ENCODE measurements at regions of chr2 and their contacts with region 1.

Region 1: GRCh38 chr2:127398239-127398590 is 10.4 kb upstream of the MAP3K2 start:
- DNase-seq: peak; percentile 49

Region 2: GRCh38 chr2:127387655-127388422 is 10.4 kb before region 1 on chr2 and contains the start of gene MAP3K2:
- CTCF ChIA-PET with region 1: no interaction called
- POLR2A ChIA-PET with region 1: interaction called, 10 read pairs
- DNase-seq: peak; percentile 99

Region 3: GRCh38 chr2:127953128-127953718 is 555.0 kb after region 1 on chr2:
- CTCF ChIA-PET with region 1: no interaction called
- POLR2A ChIA-PET with region 1: no interaction called
- DNase-seq: no peak

Measured in HEK293T (cell line).